A673 (cell line): ENCODE measurements at regions of chr7 and their contacts with region 1.

Region 1: GRCh38 chr7:18352339-18353255 is 143.0 kb upstream of the HDAC9 start:
- DNase-seq: peak; percentile 83
- H3K4me3 ChIP-seq: no peak overlapping the region
- H3K27ac ChIP-seq: peak overlapping the region; percentile 47
- H3K4me1 ChIP-seq: peaks cover 42% of the 10 kb centered on the region
- H3K27me3 ChIP-seq: no peaks in the 10 kb centered on the region
- CTCF ChIP-seq: peak; percentile 77

Region 2: GRCh38 chr7:18257711-18258110 is 94.9 kb before region 1 on chr7:
- CTCF ChIA-PET with region 1: no interaction called
- POLR2A ChIA-PET with region 1: no interaction called
- intact Hi-C with region 1: no loop called
- DNase-seq: no peak
- H3K4me3 ChIP-seq: no peak overlapping the region
- H3K27ac ChIP-seq: no peak overlapping the region
- H3K4me1 ChIP-seq: no peaks in the 10 kb centered on the region
- H3K27me3 ChIP-seq: no peaks in the 10 kb centered on the region
- CTCF ChIP-seq: no peak

Region 3: GRCh38 chr7:18426564-18427226 is 74.1 kb after region 1 on chr7:
- CTCF ChIA-PET with region 1: no interaction called
- POLR2A ChIA-PET with region 1: no interaction called
- intact Hi-C with region 1: no loop called
- DNase-seq: peak; percentile 86
- H3K4me3 ChIP-seq: peak overlapping the region; percentile 13
- H3K27ac ChIP-seq: peak overlapping the region; percentile 80
- H3K4me1 ChIP-seq: peaks cover 38% of the 10 kb centered on the region
- H3K27me3 ChIP-seq: no peaks in the 10 kb centered on the region
- CTCF ChIP-seq: no peak

Region 4: GRCh38 chr7:18570890-18571478 is 218.4 kb after region 1 on chr7:
- CTCF ChIA-PET with region 1: interaction called, 24 read pairs
- POLR2A ChIA-PET with region 1: no interaction called
- intact Hi-C with region 1: loop called (anchors 1 kb)
- DNase-seq: peak; percentile 75
- H3K4me3 ChIP-seq: no peak overlapping the region
- H3K27ac ChIP-seq: no peak overlapping the region
- H3K4me1 ChIP-seq: peaks cover 43% of the 10 kb centered on the region
- H3K27me3 ChIP-seq: no peaks in the 10 kb centered on the region
- CTCF ChIP-seq: peak; percentile 76

Region 5: GRCh38 chr7:18706670-18707069 is 354.1 kb after region 1 on chr7:
- CTCF ChIA-PET with region 1: no interaction called
- POLR2A ChIA-PET with region 1: no interaction called
- intact Hi-C with region 1: loop called (anchors 5 kb)
- DNase-seq: peak; percentile 14
- H3K4me3 ChIP-seq: no peak overlapping the region
- H3K27ac ChIP-seq: no peak overlapping the region
- H3K4me1 ChIP-seq: no peaks in the 10 kb centered on the region
- H3K27me3 ChIP-seq: no peaks in the 10 kb centered on the region
- CTCF ChIP-seq: no peak

Region 6: GRCh38 chr7:19442016-19442785 is 1089.6 kb after region 1 on chr7:
- CTCF ChIA-PET with region 1: no interaction called
- POLR2A ChIA-PET with region 1: no interaction called
- intact Hi-C with region 1: loop called (anchors 1 kb)
- DNase-seq: peak; percentile 63
- H3K4me3 ChIP-seq: no peak overlapping the region
- H3K27ac ChIP-seq: no peak overlapping the region
- H3K4me1 ChIP-seq: no peaks in the 10 kb centered on the region
- H3K27me3 ChIP-seq: no peaks in the 10 kb centered on the region
- CTCF ChIP-seq: peak; percentile 65